ENCODE measurements at regions of chr6 and their contacts with region 1.

Region 1: DNA sequence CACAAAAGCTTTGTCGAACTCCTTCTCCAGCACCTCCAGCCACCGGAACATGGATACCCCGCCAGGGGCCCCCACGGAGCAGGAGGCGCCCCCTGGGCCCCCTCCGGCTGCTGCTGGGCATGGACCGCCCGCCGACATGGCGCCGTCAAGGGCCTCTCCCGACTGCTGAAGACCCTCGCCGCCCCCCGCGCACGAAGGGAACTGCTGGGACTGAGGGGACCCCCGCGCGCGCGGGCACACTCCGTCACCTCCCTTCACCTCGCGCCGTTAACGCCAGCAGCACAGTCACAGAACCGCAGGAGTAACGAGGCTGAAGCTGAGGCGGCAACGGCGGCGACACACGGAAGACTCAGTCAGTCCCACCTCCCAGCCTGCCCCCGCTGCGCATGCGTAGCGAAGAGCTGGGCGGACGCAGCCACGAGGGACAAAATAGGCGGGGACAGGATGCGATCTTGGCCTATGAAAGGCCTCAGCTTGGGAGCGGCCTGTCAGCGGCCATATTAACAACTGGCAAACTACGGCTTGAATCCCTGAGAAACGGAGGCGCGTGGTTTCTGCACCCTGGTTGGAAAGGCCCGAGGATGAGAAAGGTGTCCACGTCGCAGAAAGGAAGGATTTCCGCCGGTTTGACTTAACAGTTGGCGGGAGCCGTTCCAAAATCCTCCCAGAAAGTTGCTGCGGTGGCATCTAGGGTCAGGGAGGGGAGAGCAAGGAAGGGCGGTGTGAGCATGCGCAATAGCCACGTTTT is at the start of gene GOPC:
- DNase-seq: peak; percentile 95 to 96
- ATAC-seq: peak; percentile 99 to 100 (median 100)
- H3K4me3 ChIP-seq: peak within 1 kb of the TSS; percentile 68 to 99 (median 92)
- H3K27ac ChIP-seq: peak within 1 kb of the TSS; percentile 81 to 94 (median 92)
- H3K4me1 ChIP-seq: peaks cover 0 to 39% (median 29%) of the 10 kb centered on the region in 9 donors
- H3K27me3 ChIP-seq: no peaks in the 10 kb centered on the region
- CTCF ChIP-seq: peak in 4 of 9 donors; percentile 9 to 42 (median 28)
- total RNA-seq, gene GOPC: 16.7 to 32.8 (median 24.3) TPM

Region 2: GRCh38 chr6:117167520-117168271 is 434.6 kb before region 1 on chr6:
- intact Hi-C with region 1: no loop called
- DNase-seq: no peak
- ATAC-seq: peak in 5 of 8 donors; percentile 33 to 70 (median 49)
- H3K4me3 ChIP-seq: no peak overlapping the region
- H3K27ac ChIP-seq: peak overlapping the region in 2 of 10 donors; percentile 63 to 70
- H3K4me1 ChIP-seq: peaks cover 0 to 31% (median 0%) of the 10 kb centered on the region in 9 donors
- H3K27me3 ChIP-seq: no peaks in the 10 kb centered on the region
- CTCF ChIP-seq: no peak

Region 3: GRCh38 chr6:117449549-117450439 is 152.5 kb before region 1 on chr6:
- intact Hi-C with region 1: loop called in 5 of 10 experiments (anchors 2 to 5 kb)
- DNase-seq: peak in 1 of 2 donors; percentile 58
- ATAC-seq: no peak
- H3K4me3 ChIP-seq: no peak overlapping the region
- H3K27ac ChIP-seq: no peak overlapping the region
- H3K4me1 ChIP-seq: peaks cover 0 to 14% (median 0%) of the 10 kb centered on the region in 9 donors
- H3K27me3 ChIP-seq: peaks cover 0 to 23% (median 12%) of the 10 kb centered on the region in 7 donors
- CTCF ChIP-seq: peak; percentile 63 to 86 (median 77)

Region 4: DNA sequence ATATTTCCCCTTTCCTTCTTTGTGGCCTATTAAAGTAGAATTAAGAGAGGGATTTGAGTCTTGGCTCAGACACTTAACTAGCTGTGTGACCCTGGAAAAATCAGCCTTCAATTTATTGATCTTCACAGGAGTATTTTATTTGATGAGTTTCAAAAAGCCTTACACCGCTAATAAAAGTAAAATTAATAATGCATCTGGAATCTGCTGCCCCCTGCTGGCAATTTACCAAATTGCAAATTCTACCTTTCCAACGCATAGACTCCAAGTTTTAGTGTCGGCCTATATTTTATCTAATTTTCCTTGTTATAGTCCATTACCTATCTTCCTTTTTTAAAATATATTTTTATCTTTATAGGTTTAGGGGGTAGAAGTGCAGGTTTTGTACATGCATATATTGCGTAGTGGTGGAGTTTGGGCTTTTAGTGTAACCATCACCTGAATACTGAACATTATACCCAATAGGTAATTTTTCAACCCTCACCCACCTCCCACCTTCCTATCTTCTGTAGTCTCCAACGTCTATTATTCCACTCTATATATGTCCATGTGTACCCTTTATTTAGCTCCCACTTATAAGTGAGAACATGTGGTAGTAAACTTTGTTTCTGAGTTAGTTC is 46.3 kb before region 1 on chr6:
- intact Hi-C with region 1: loop called in 3 of 10 experiments (anchors 10 kb)
- DNase-seq: peak in 1 of 2 donors; percentile 41
- ATAC-seq: peak in 1 of 8 donors; percentile 37
- H3K4me3 ChIP-seq: no peak overlapping the region
- H3K27ac ChIP-seq: no peak overlapping the region
- H3K4me1 ChIP-seq: peaks cover 0 to 7% (median 0%) of the 10 kb centered on the region in 9 donors
- H3K27me3 ChIP-seq: no peaks in the 10 kb centered on the region
- CTCF ChIP-seq: peak; percentile 84 to 96 (median 88)

Region 5: DNA sequence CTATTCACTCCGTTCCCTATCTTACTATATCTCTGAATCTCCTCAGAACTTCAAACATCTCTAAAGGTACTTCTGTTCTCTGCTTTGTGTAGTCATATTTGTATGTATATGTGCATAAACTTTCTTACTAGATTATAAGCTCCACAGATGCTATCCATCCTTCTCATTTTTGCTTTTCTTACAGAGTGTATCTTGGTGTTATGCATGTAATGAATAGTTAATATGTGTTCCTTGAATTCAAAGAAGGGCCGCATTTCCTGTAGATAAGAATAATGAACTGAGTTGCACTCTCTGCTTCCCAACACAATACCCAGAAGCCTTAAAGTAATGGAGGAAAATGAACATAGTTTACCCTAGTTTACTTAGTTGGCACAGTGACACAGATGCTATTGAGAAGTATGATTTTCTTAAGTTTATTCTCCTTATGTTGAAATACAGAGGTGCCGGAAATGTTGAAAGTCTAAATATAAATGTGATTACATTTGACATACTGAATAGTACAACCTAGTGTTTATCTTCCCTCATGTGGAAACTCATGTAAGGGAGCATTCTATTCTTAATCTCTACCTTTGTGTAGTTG is 78.9 kb after region 1 on chr6:
- intact Hi-C with region 1: loop called in 3 of 10 experiments (anchors 5 to 10 kb)
- DNase-seq: no peak
- ATAC-seq: peak in 4 of 8 donors; percentile 40 to 44 (median 41)
- H3K4me3 ChIP-seq: peak overlapping the region in 1 of 10 donors; percentile 11
- H3K27ac ChIP-seq: peak overlapping the region in 5 of 10 donors; percentile 9 to 62 (median 53)
- H3K4me1 ChIP-seq: peaks cover 2 to 86% (median 61%) of the 10 kb centered on the region in 9 donors
- H3K27me3 ChIP-seq: no peaks in the 10 kb centered on the region
- CTCF ChIP-seq: no peak

Measured in heart right ventricle (tissue), 16 donors.